GM12878 (cell line): ENCODE measurements at regions of chr1 and their contacts with region 1.

Region 1: DNA sequence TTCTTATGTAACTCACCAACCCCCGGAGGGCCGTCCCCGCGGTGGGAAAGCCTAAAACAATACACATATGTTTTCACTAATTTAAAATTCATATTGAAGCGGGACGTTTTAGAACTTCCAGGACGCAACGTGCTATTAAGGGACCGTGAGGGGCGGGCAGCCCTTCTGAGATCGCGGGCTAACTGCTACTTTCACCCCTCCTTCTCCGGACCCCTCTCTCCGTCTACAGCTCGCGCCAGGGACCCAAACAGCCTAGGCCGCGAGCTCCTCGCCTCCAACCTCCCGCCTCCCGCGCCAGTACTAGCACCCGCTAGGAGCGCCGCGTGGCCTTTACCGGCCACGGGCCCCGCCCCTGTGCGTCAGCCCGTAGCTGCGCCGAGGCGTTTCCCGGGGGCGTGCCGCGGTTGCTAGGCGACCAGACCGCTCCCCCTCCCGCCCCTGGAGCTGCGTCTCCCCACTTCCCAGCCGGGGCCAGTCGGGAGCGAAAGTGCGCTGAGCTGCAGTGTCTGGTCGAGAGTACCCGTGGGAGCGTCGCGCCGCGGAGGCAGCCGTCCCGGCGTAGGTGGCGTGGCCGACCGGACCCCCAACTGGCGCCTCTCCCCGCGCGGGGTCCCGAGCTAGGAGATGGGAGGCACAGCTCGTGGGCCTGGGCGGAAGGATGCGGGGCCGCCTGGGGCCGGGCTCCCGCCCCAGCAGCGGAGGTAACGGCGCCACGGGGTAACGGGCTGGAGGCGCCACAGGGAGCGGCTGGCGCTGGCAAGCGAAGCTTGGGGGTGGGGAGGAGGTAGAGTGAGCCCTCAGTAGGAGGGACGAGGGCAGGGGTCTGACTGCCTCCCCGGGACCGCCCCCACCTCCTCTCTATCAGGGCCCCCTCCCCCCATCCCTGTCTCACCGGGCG is at the start of gene DYRK3:
- DNase-seq: peak; percentile 71
- ATAC-seq: peak; percentile 92
- H3K4me3 ChIP-seq: peak within 1 kb of the TSS; percentile 94
- H3K27ac ChIP-seq: peak within 1 kb of the TSS; percentile 62
- H3K4me1 ChIP-seq: peaks cover 26% of the 10 kb centered on the region
- H3K27me3 ChIP-seq: no peaks in the 10 kb centered on the region
- CTCF ChIP-seq: 0 out of 6 replicates have a peak, but pooled peaks of 1 of the 3 experiments have one; percentile 5
- EP300 ChIP-seq: 0 out of 4 replicates have a peak, but pooled peaks of 1 of the 2 experiments have one; percentile 17
- POLR2A ChIP-seq: peak; percentile 94
- RAD21 ChIP-seq: no peak
- polyA plus RNA-seq, gene DYRK3: 1.6 to 2.8 TPM

Region 2: DNA sequence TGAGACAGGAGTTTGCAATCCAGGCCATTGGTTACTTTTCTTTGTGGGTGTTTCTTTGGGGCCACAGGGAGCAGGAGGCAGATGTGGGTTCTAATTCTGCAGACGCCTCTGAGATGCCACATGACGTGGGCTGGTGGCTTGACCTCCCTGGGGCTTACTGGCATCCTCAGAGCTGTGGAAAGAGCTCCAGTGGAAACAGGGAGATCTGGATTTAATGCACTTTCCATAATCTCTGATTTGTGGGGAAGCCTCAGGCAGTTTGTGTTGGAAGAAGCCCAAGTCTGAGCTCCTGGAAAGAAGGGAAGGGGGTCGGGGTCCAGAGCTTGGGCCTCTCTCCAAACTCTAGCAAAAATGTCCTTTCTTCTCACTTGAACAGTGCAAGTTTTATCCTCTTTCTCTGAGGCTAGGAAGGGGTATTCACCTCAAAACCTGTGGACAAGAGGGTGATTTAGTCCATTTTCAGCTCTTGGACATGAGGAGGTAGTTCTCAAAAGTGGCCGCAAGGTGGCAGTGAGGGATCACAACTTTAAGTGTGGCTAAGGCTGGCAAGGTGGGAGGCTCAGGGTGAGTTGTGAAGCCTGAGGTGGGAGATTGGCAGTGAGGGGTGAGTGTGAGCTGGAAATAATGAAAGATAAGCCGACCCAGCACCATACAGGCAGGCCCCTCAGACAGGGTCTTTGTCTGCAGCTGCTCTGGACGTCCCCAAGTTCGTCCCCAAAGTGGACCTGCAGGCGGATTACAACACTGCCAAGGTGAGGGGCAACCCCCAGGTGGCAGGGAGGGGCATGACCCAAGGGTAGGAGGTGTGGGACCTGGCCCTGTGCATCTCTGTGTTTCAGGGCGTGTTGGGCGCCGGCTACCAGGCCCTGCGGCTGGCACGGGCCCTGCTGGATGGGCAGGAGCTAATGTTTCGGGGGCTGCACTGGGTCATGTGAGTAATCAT is 155.9 kb before region 1 on chr1:
- CTCF ChIA-PET with region 1: interaction called, 8 read pairs
- POLR2A ChIA-PET with region 1: no interaction called
- RAD21 ChIA-PET with region 1: interaction called, 16 read pairs
- SMC1A ChIA-PET with region 1: interaction called, 5 read pairs
- in situ Hi-C with region 1: no loop called
- intact Hi-C with region 1: no loop called
- DNase-seq: no peak
- ATAC-seq: peak; percentile 77
- H3K4me3 ChIP-seq: no peak overlapping the region
- H3K27ac ChIP-seq: no peak overlapping the region
- H3K4me1 ChIP-seq: peaks cover 17% of the 10 kb centered on the region
- H3K27me3 ChIP-seq: no peaks in the 10 kb centered on the region
- CTCF ChIP-seq: peak; percentile 77 to 87 (median 84)
- EP300 ChIP-seq: no peak
- POLR2A ChIP-seq: no peak
- RAD21 ChIP-seq: peak; percentile 80

Region 3: GRCh38 chr1:206651958-206652890 is 16.9 kb after region 1 on chr1:
- CTCF ChIA-PET with region 1: interaction called, 1,150 read pairs
- POLR2A ChIA-PET with region 1: interaction called, 8 read pairs
- RAD21 ChIA-PET with region 1: interaction called, 42 read pairs
- SMC1A ChIA-PET with region 1: interaction called, 301 read pairs
- in situ Hi-C with region 1: no loop called
- intact Hi-C with region 1: no loop called
- DNase-seq: no peak
- ATAC-seq: peak; percentile 30; the same call in 2 of the 3 replicates
- H3K4me3 ChIP-seq: no peak overlapping the region
- H3K27ac ChIP-seq: no peak overlapping the region
- H3K4me1 ChIP-seq: no peaks in the 10 kb centered on the region
- H3K27me3 ChIP-seq: no peaks in the 10 kb centered on the region
- CTCF ChIP-seq: no peak
- EP300 ChIP-seq: no peak
- POLR2A ChIP-seq: no peak
- RAD21 ChIP-seq: no peak

Region 4: GRCh38 chr1:206674745-206675175 is 39.4 kb after region 1 on chr1:
- CTCF ChIA-PET with region 1: interaction called, 1,150 read pairs
- POLR2A ChIA-PET with region 1: interaction called, 6 read pairs
- RAD21 ChIA-PET with region 1: interaction called, 5 read pairs
- SMC1A ChIA-PET with region 1: interaction called, 301 read pairs
- in situ Hi-C with region 1: no loop called
- intact Hi-C with region 1: no loop called
- DNase-seq: no peak
- ATAC-seq: no peak
- H3K4me3 ChIP-seq: no peak overlapping the region
- H3K27ac ChIP-seq: no peak overlapping the region
- H3K4me1 ChIP-seq: peaks cover 51% of the 10 kb centered on the region
- H3K27me3 ChIP-seq: no peaks in the 10 kb centered on the region
- CTCF ChIP-seq: no peak
- EP300 ChIP-seq: no peak
- POLR2A ChIP-seq: no peak
- RAD21 ChIP-seq: no peak

Region 5: DNA sequence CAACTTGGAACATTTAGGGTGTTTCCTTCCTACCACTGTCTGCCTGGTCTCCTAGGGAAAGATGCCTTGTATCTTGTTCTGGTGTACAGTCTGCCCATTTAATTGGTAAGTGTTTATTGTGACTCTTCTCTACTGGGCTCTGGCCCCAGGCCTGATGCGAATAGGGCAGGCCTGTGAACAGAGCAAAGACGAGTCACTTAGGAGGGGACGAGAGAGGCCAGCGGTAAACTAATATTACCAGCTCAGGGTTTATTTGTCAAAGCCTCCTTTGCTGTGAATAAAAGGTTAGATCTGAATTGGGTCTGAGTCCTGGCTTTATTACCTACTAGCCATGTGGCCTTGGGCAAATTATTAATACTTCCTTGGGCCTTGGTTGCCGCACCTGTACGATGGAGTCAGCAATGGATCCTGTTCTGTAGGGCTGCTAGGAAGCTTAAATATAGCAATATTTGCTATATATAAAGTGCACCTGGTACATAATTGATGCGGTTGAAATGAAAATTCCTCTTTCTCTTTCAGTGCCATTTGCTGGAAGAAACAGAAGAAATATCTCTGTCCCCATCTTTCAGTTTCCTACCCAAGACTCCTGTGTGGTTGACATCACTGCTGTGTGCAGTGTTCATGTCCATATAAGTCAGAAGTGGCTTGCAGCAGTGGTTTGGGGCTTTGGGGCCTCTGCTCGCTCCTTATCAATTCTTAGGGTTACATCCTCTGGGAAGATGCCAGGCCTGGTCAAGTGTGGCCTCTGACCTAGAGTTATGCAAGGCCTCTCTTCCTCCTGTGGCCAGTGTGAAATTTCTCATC is 81.7 kb after region 1 on chr1:
- CTCF ChIA-PET with region 1: interaction called, 9 read pairs
- POLR2A ChIA-PET with region 1: interaction called, 6 read pairs
- RAD21 ChIA-PET with region 1: interaction called, 19 read pairs
- SMC1A ChIA-PET with region 1: interaction called, 13 read pairs
- in situ Hi-C with region 1: no loop called
- intact Hi-C with region 1: loop called (anchors 10 kb)
- DNase-seq: peak; percentile 88
- ATAC-seq: peak; percentile 78
- H3K4me3 ChIP-seq: 0 out of 2 replicates have a peak overlapping the region, but pooled peaks have one; percentile 19
- H3K27ac ChIP-seq: peak overlapping the region; percentile 73
- H3K4me1 ChIP-seq: peaks cover 74% of the 10 kb centered on the region
- H3K27me3 ChIP-seq: no peaks in the 10 kb centered on the region
- CTCF ChIP-seq: no peak
- EP300 ChIP-seq: peak in 1 of 2 experiments; percentile 34; a peak in 1 of 4 replicates
- POLR2A ChIP-seq: no peak
- RAD21 ChIP-seq: no peak

Region 6: DNA sequence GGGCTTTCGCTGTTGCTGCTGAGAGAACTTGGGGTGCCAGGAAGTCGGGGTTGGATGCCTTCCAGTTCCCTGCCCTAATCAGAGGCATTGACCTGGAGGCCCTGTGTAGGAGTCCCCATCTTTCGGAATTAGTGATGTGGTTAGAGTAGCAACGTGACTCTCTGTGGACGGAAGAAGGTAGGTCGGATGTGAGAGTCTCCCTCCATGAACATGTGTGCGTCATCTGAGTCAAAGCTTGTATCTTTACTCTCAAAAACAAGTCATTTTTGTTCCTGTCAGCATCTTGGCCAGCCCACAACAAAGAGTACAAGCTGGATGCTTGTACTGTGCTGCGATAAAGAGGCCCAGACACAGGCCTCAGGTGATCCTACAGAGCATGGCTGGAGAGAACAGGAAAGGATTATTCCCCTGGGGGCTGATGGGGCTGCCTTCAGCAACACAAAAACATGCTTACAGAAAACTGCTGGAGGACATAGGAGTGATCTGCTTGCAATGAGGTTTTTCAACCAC is 167.9 kb after region 1 on chr1:
- CTCF ChIA-PET with region 1: interaction called, 10 read pairs
- POLR2A ChIA-PET with region 1: interaction called, 6 read pairs
- RAD21 ChIA-PET with region 1: interaction called, 7 read pairs
- SMC1A ChIA-PET with region 1: interaction called, 26 read pairs
- in situ Hi-C with region 1: no loop called
- intact Hi-C with region 1: loop called (anchors 2 kb)
- DNase-seq: peak; percentile 98
- ATAC-seq: peak; percentile 97
- H3K4me3 ChIP-seq: no peak overlapping the region
- H3K27ac ChIP-seq: peak overlapping the region; percentile 55
- H3K4me1 ChIP-seq: peaks cover 20% of the 10 kb centered on the region
- H3K27me3 ChIP-seq: no peaks in the 10 kb centered on the region
- CTCF ChIP-seq: no peak
- EP300 ChIP-seq: peak; percentile 98 to 99
- POLR2A ChIP-seq: peak; percentile 26; the same call in 1 of the 2 replicates
- RAD21 ChIP-seq: peak; percentile 9; the same call in 1 of the 2 replicates